Cardiac septum (tissue), 1 donor: ENCODE measurements at regions of chr13 and their contacts with region 1.

Region 1: DNA sequence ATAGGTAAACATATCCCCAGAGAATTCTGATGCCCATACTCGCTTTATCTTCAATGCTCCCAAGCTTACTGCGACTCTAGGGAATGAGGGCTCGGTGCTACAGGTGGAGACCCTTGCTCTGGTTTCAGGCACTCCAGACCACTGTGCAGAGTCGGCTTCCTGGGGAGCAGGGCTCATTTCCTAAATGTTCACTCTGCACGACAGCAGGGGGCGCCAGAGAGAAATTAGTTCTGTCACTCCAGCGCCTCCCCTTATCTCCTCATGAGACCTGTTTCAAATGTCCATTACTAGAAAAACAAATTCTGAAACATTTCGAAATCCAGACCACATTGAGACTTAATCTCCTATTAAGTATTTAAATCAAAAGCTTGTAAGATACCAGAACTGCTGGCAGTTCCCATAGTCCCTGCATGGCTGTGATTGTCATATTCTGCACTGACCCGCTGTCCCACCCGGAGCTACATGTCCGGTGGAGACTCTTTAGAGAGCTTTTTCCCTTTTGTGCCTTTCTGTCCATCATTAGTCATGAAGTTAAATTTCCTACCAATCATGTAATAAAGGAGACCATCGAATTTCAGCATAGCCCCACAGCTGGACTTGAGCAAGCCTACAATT is 22.4 kb downstream of the EPSTI1 start:
- DNase-seq: peak; percentile 85

Region 2: DNA sequence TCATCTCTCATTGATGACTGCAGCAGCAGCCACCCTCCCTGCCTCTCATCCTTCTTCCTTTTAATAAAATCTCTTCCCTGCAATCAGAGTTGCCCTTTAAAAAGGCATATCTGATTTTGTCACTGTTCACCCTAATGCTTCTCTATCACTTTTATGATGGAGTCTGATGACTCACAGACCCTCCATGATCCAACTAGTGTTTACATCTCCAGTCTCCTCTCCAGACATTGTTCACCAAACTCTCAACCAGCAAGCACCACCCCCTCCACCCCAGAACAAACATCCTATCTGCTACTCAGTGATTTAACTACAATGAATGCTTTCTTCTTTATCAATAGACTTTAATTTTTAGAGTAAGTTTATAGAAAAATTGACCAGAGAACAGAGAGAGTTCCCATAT is 336.2 kb before region 1 on chr13:
- intact Hi-C with region 1: no loop called
- DNase-seq: no peak

Region 3: GRCh38 chr13:42883771-42884467 is 85.7 kb before region 1 on chr13:
- intact Hi-C with region 1: loop called (anchors 10 kb)
- DNase-seq: no peak

Region 4: DNA sequence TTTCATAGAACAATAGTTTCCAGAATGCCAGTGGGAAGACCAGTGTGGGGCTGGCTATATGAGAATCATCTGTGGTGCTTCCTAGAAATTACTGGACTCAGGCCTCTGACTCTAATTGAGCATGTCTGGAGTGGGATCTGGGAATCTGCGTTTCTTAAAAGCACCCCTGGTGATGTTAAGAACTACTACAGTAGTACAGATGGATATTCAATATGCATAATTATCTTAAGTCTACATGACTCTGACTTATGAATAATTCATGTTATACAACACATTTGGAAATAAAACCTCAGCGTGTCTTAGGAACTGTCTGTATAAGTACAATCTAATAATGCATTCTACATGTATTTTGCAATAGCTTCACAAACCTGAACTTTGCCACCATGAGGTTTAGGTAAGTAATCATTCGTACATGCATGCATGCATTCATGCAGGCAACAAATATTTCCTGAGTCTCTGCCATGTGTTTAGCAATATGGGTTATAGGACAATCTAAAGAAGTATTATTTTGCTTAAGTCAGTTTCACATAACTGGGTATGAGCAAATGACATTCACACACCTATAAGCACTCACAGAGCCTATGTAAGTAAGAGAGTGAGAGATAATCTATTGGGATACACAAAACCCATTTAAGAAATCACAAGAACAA is 39.7 kb before region 1 on chr13:
- intact Hi-C with region 1: no loop called
- DNase-seq: no peak

Region 5: DNA sequence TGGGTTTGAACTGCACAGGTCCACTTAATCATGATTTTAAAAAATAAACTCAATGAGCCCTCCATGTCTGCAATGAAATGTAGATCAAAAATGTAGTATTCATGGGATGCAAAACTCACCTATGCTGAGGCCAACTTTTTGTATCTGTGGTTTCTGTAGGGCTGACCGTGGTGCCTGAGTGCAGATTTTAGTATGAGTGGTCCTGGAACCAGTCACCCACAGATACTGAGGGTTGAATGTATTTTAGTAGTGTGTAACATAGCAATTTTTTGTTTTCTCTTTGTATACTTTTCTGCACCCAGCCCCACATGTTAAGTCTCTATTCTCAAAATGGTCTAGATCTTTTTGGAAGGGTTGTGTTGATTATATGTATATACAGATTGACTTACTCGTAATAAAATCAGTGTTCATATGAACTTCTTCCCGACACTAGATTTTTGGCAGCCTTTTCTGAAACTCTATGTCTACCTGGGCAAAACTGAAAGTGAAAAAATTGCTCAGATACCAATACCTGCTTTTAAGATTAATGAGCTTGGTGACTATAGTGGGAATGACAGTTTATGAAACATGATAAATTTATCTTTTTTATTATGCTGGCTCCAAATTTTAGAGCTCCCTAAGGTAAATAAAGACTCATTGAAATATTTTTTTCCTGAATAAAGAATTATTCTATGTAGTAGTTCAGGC is 105.3 kb after region 1 on chr13:
- intact Hi-C with region 1: loop called (anchors 5 kb)
- DNase-seq: no peak

Region 6: GRCh38 chr13:43132257-43132656 is 162.6 kb after region 1 on chr13:
- intact Hi-C with region 1: loop called (anchors 2 kb)
- DNase-seq: no peak

Region 7: DNA sequence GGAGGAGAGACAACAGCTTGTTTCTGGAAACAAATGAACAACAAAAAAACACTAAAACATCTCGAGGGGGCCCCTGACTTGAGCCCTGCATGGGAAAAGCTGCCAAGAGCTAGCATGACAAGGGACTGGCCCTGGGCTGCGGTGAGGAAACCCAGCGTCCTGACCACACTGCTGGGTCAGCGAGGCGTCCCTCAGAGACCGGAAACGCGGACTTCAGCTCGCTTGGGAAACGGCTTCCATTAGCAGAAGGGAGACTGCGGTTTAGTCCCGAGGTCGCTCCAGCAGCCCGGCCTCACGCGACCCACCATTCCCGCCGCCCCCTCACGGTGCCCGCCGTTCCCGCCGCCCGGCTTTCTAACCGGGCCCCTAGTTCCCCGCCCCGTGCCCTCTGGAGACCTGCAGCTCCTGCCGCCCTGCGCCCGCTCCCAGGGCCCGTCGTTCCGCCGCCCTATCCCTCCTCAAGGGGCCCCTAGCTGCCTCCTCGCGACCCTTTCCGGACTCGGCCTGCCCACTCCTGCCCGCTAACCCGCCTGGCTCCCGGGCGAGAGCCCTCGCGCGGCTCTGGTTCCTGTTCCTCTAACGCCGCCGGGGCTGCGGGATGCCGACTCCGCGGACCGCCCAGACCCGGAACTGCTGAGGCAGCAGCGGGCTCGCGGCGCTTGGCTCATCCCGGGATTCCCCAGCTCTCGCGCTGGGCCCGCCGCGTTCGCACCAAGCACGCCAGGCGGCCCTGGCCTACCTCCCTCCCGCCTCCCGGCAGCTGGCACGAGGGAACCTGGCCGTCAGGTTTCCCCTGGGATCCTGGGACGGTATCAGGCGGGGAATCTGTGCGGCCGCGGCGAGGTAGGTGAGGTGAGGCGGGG is 909.5 kb after region 1 on chr13 and contains the start of gene CCDC122:
- intact Hi-C with region 1: loop called (anchors 10 kb)
- DNase-seq: peak; percentile 93
- total RNA-seq, gene CCDC122: 8.9 TPM